Astrocyte of the cerebellum (primary cell): ENCODE measurements at regions of chr6 and their contacts with region 1.

Region 1: GRCh38 chr6:7196019-7196402 is 88.2 kb downstream of the RREB1 start:
- DNase-seq: no peak
- H3K4me3 ChIP-seq: no peak overlapping the region
- CTCF ChIP-seq: no peak

Region 2: GRCh38 chr6:6452002-6452401 is 744.0 kb before region 1 on chr6:
- in situ Hi-C with region 1: no loop called
- DNase-seq: no peak
- H3K4me3 ChIP-seq: no peak overlapping the region
- CTCF ChIP-seq: no peak

Region 3: GRCh38 chr6:7254980-7255835 is 59.2 kb after region 1 on chr6:
- in situ Hi-C with region 1: loop called (anchors 5 kb)
- DNase-seq: no peak
- H3K4me3 ChIP-seq: no peak overlapping the region
- CTCF ChIP-seq: no peak